ENCODE measurements at regions of chr19 and their contacts with region 1.

Region 1: DNA sequence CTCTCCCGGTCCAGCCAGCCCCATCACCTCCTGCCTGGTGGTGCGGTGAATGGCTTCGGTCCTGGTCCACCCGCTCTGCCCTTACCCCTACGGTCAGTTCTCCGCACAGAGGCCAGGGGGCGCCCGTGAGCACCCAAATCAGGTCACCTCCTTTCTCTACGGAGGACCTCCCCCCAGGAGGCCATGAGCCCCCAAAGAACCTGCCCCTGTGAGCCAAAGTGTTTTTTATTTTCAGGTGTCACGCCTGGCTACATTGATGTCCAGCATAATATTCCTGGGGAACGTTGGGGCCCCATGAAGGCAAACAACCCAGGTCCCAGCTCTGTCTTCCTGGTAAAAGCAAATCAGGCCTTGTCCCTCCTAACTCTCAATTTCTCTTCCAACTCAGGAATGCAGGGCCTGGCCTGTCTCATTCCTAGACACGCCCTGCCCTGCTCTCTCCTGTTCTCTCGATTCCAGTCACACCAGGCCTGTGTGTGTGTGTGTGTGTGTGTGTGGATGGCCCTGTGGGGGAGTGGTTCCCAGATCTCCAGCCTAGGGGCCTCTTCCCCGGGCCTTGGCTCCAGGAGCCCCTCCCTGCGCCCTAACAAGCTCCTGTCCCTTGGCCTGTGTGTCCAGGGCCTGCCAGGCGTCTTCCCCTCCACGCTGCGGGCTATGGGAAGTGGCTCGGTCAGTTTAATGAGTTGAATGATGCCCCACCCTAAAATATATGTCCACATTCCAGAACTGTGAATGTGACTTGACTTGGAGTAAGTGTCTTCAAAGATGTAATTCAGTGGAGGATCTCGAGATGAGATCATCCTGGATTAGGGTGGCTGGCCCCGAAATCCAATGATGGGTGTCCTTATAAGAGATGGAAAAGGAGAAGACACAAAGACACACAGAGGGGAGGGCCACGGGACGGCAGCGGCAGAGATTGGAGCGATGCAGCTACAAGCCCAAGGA is 9.8 kb upstream of the GIPC1 start:
- DNase-seq: peak; percentile 63 to 85 (median 70)
- ATAC-seq: peak; percentile 42
- H3K4me3 ChIP-seq: no peak overlapping the region
- H3K4me3 Mint-ChIP-seq: peak overlapping the region; percentile 66
- H3K27ac ChIP-seq: peak overlapping the region; percentile 50 to 68
- H3K27ac Mint-ChIP-seq: peak overlapping the region; percentile 96
- H3K4me1 ChIP-seq: peaks cover 53% of the 10 kb centered on the region
- H3K4me1 Mint-ChIP-seq: peaks cover 70% of the 10 kb centered on the region
- H3K27me3 ChIP-seq: no peaks in the 10 kb centered on the region
- H3K27me3 Mint-ChIP-seq: no peaks in the 10 kb centered on the region
- CTCF ChIP-seq: peak; percentile 85

Region 2: DNA sequence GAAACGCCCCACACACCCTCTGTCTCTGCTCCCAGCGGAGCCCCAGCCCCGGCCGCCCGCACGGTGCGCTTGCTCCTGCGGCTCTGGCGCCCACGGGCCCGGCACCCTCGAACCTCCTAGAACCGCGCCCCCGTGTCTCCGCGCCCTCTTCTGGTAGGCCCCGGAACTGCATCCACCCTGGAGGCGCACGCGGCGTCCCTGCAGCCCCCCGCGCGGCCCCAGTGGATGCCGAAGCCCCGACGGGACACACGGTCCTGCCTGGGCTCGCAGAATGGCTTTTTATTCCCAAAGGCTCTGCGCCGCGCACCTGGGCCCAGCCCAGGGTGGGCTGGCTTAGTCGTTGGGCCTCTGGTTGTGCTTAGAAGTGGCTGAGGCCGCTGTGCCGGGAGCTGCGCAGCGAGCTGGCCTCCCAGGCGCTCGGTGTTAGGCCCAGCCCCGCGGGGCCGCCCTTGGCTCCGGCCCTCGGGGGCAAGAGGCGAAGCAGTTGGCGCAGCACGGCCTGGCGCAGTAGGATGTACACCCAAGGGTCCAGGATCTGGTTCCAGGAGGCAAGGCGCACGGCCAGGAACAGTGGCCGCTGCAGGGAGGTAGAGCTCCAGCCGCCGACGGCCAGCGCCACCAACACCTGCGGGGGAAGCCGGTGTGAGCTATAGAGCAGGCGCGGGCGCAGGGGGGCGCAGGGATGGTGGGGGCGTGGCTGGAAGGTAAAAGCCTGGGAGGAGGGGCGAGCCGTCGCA is 33.4 kb before region 1 on chr19:
- CTCF ChIA-PET with region 1: no interaction called
- POLR2A ChIA-PET with region 1: interaction called, 11 read pairs
- intact Hi-C with region 1: no loop called
- DNase-seq: peak; percentile 77 to 91 (median 86)
- ATAC-seq: peak; percentile 84
- H3K4me3 ChIP-seq: peak overlapping the region; percentile 34
- H3K4me3 Mint-ChIP-seq: peak overlapping the region; percentile 55
- H3K27ac ChIP-seq: no peak overlapping the region
- H3K27ac Mint-ChIP-seq: no peak overlapping the region
- H3K4me1 ChIP-seq: peaks cover 31% of the 10 kb centered on the region
- H3K4me1 Mint-ChIP-seq: peaks cover 36% of the 10 kb centered on the region
- H3K27me3 ChIP-seq: peaks cover 19 to 22% of the 10 kb centered on the region in 2 experiments
- H3K27me3 Mint-ChIP-seq: peaks cover 33% of the 10 kb centered on the region
- CTCF ChIP-seq: peak; percentile 98

Region 3: GRCh38 chr19:14529254-14530004 is 23.7 kb after region 1 on chr19 and contains the start of gene TECR:
- CTCF ChIA-PET with region 1: interaction called, 7 read pairs
- POLR2A ChIA-PET with region 1: interaction called, 430 read pairs
- intact Hi-C with region 1: loop called in 1 of 2 experiments (anchors 1 kb)
- DNase-seq: peak; percentile 99 to 100 (median 100)
- ATAC-seq: peak; percentile 92
- H3K4me3 ChIP-seq: peak within 1 kb of the TSS; percentile 92
- H3K4me3 Mint-ChIP-seq: peak within 1 kb of the TSS; percentile 92
- H3K27ac ChIP-seq: peak within 1 kb of the TSS; percentile 85 to 88
- H3K27ac Mint-ChIP-seq: peak within 1 kb of the TSS; percentile 100
- H3K4me1 ChIP-seq: peaks cover 59% of the 10 kb centered on the region
- H3K4me1 Mint-ChIP-seq: peaks cover 57% of the 10 kb centered on the region
- H3K27me3 ChIP-seq: no peaks in the 10 kb centered on the region
- H3K27me3 Mint-ChIP-seq: no peaks in the 10 kb centered on the region
- CTCF ChIP-seq: no peak
- total RNA-seq, gene TECR: 217 to 232 TPM

Region 4: GRCh38 chr19:14542711-14543328 is 37.1 kb after region 1 on chr19:
- CTCF ChIA-PET with region 1: interaction called, 3 read pairs
- POLR2A ChIA-PET with region 1: interaction called, 11 read pairs
- intact Hi-C with region 1: no loop called
- DNase-seq: peak in 1 of 14 experiments; percentile 30
- ATAC-seq: no peak
- H3K4me3 ChIP-seq: no peak overlapping the region
- H3K4me3 Mint-ChIP-seq: no peak overlapping the region
- H3K27ac ChIP-seq: no peak overlapping the region
- H3K27ac Mint-ChIP-seq: no peak overlapping the region
- H3K4me1 ChIP-seq: peaks cover 30% of the 10 kb centered on the region
- H3K4me1 Mint-ChIP-seq: peaks cover 51% of the 10 kb centered on the region
- H3K27me3 ChIP-seq: no peaks in the 10 kb centered on the region
- H3K27me3 Mint-ChIP-seq: no peaks in the 10 kb centered on the region
- CTCF ChIP-seq: no peak

Region 5: DNA sequence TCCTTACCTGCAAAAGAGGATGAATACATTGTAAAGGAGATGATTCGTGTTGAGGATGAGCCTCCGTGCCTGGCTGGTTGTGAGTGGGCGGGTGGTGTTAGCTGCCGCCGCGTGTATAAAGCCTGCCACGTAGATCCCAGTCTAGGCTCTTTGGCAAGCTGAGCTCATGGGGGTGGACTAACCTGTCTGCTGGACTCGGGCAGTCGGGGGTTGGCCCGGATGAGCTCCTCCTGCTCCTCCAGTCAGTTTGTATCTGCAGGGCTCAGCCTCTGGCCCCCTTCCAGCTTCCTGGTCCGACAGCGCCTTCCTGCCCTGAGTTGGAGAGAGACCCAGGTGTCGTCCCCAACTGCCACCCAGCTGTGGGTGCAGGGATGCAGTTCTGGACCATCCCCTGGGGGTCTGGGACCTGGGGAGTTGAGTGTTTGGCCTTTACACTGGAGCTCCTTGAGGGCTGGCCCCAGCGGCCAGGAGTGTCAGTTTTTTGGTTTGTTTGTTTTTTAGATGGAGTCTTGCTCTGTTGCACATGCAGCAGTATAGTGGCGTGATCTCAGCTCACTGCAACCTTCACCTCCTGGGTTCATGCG is 44.5 kb after region 1 on chr19:
- CTCF ChIA-PET with region 1: interaction called, 16 read pairs
- POLR2A ChIA-PET with region 1: interaction called, 39 read pairs
- intact Hi-C with region 1: loop called (anchors 1 kb)
- DNase-seq: no peak
- ATAC-seq: no peak
- H3K4me3 ChIP-seq: no peak overlapping the region
- H3K4me3 Mint-ChIP-seq: no peak overlapping the region
- H3K27ac ChIP-seq: no peak overlapping the region
- H3K27ac Mint-ChIP-seq: peak overlapping the region; percentile 92
- H3K4me1 ChIP-seq: peaks cover 54% of the 10 kb centered on the region
- H3K4me1 Mint-ChIP-seq: peaks cover 48% of the 10 kb centered on the region
- H3K27me3 ChIP-seq: no peaks in the 10 kb centered on the region
- H3K27me3 Mint-ChIP-seq: no peaks in the 10 kb centered on the region
- CTCF ChIP-seq: no peak

Region 6: DNA sequence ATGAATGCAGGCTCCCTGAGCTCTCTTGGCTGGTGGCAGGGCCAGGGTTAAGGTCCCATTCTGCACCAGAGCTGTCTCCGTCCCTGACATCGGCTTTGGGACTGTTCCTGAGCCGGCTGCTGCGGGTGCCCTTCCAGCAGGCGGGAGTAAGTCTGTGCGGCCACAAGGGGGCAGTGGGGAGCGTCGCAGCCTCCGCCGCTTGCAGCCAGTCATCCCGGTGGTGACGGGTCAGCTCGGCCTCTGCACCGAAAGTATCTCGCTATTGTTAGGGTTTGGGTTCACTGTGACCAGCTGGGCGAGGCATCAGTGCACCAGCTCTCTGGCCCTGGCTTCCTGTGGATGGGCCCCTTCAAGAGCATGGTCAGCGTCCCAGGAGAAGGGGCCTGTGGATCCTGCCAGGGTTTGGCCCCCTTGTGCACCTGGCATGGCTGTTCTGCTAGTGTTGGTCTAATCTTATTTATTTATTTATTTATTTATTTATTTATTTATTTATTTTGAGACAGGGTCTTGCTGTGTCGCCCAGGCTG is 51.0 kb after region 1 on chr19:
- CTCF ChIA-PET with region 1: interaction called, 16 read pairs
- POLR2A ChIA-PET with region 1: interaction called, 39 read pairs
- intact Hi-C with region 1: loop called (anchors 1 kb)
- DNase-seq: peak; percentile 52 to 88 (median 66)
- ATAC-seq: peak; percentile 83
- H3K4me3 ChIP-seq: peak overlapping the region; percentile 28
- H3K4me3 Mint-ChIP-seq: peak overlapping the region; percentile 66
- H3K27ac ChIP-seq: no peak overlapping the region
- H3K27ac Mint-ChIP-seq: peak overlapping the region; percentile 81
- H3K4me1 ChIP-seq: peaks cover 78% of the 10 kb centered on the region
- H3K4me1 Mint-ChIP-seq: peaks cover 39% of the 10 kb centered on the region
- H3K27me3 ChIP-seq: no peaks in the 10 kb centered on the region
- H3K27me3 Mint-ChIP-seq: no peaks in the 10 kb centered on the region
- CTCF ChIP-seq: peak; percentile 96

Measured in CD4-positive, alpha-beta T cell (primary cell).